ENCODE measurements at regions of chr7 and their contacts with region 1.

Region 1: DNA sequence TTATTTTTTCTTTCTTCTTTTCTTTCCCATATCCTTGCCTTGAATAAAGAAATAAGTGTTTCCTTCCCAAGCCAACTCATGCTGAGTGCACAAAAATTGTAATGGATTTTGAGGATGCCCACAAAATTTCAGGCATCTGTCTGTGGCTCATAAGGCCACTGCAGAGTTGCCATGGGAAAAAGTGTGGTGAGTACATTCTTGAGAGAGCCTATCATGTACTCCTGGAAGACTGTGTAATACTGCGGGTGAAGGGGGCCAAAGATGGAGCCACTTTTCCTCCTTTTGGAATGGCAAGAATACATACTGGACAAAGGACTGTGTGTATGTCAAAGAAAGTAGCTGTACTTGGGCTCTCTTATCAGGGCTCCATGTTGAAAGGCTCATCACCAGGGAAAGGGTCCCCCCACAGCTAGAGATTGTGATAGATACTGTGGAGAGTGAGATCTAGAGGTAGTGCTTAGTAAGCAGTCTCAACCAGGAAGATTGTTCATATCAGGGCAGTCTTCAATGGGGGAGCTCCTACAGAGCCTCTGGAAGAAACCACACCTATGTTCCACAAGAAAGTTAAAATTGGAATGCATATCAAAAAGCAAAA is 341.6 kb upstream of the KCND2 start:
- DNase-seq: no peak
- H3K4me3 ChIP-seq: no peak overlapping the region
- H3K27ac ChIP-seq: no peak overlapping the region
- H3K4me1 ChIP-seq: no peaks in the 10 kb centered on the region
- H3K27me3 ChIP-seq: no peaks in the 10 kb centered on the region
- CTCF ChIP-seq: no peak
- POLR2A ChIP-seq: no peak

Region 2: GRCh38 chr7:119959811-119960210 is 28.5 kb after region 1 on chr7:
- intact Hi-C with region 1: no loop called
- DNase-seq: no peak
- H3K4me3 ChIP-seq: no peak overlapping the region
- H3K27ac ChIP-seq: no peak overlapping the region
- H3K4me1 ChIP-seq: no peaks in the 10 kb centered on the region
- H3K27me3 ChIP-seq: no peaks in the 10 kb centered on the region
- CTCF ChIP-seq: no peak
- POLR2A ChIP-seq: no peak

Region 3: GRCh38 chr7:120431016-120431415 is 499.7 kb after region 1 on chr7:
- intact Hi-C with region 1: loop called (anchors 5 kb)
- DNase-seq: no peak
- H3K4me3 ChIP-seq: no peak overlapping the region
- H3K27ac ChIP-seq: no peak overlapping the region
- H3K4me1 ChIP-seq: no peaks in the 10 kb centered on the region
- H3K27me3 ChIP-seq: no peaks in the 10 kb centered on the region
- CTCF ChIP-seq: no peak
- POLR2A ChIP-seq: no peak